CD4-positive, alpha-beta T cell (primary cell): ENCODE measurements at regions of chr15 and their contacts with region 1.

Region 1: DNA sequence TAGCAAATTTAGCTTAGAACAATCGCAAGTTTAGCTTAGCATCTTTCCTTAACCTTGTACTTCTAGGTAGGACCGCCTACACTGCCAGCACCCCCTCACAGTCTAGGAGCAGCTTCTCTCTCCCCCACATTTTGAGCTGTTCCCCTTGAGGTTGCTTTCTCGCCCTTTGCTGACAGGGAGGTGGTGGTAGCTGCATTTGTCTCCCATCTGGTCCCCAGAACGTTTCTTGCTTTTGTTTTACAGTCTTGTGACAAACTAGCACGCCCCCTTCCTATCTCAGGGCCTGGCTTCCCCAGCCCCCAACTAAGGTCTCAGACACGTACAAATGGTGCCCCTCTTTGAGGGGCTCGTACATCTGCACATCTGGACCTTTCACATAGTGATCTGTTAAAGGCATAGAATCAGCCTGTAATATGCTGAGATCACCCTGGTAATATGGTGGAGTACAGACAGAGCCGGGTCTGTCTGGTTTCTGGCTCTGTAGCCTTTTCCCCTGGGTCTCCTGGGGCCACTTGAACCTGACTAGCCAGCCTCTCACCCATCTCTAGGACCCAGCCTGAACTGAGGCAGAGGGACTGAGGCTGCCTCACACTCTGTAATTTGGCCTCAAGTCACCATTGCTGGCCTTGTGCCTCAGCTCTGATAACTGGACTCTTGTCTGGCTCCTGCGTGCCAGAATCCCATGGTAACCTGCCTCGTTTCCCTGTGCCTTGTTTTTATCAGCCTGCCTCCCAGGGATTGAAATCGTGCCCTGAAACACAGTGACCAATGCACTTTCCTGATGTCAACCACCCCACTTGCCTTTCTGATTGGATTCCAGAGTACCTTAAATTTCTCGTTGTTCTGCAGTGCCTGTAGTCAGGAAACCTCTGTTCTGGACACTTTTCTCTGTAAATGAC is 27.7 kb downstream of the CRTC3 start:
- DNase-seq: no peak
- ATAC-seq: no peak
- H3K4me3 ChIP-seq: no peak overlapping the region
- H3K4me3 Mint-ChIP-seq: peak overlapping the region; percentile 5
- H3K27ac ChIP-seq: no peak overlapping the region
- H3K27ac Mint-ChIP-seq: peak overlapping the region; percentile 93
- H3K4me1 ChIP-seq: peaks cover 41% of the 10 kb centered on the region
- H3K4me1 Mint-ChIP-seq: peaks cover 86% of the 10 kb centered on the region
- H3K27me3 ChIP-seq: no peaks in the 10 kb centered on the region
- H3K27me3 Mint-ChIP-seq: no peaks in the 10 kb centered on the region
- CTCF ChIP-seq: no peak

Region 2: GRCh38 chr15:90529371-90530249 is 27.8 kb before region 1 on chr15 and contains the start of gene CRTC3:
- CTCF ChIA-PET with region 1: interaction called, 5 read pairs
- POLR2A ChIA-PET with region 1: interaction called, 28 read pairs
- intact Hi-C with region 1: no loop called
- DNase-seq: peak; percentile 31 to 85 (median 54)
- ATAC-seq: peak; percentile 80
- H3K4me3 ChIP-seq: peak within 1 kb of the TSS; percentile 94
- H3K4me3 Mint-ChIP-seq: peak within 1 kb of the TSS; percentile 97
- H3K27ac ChIP-seq: peak within 1 kb of the TSS; percentile 44 to 72
- H3K27ac Mint-ChIP-seq: peak within 1 kb of the TSS; percentile 92
- H3K4me1 ChIP-seq: peaks cover 36% of the 10 kb centered on the region
- H3K4me1 Mint-ChIP-seq: peaks cover 39% of the 10 kb centered on the region
- H3K27me3 ChIP-seq: no peaks in the 10 kb centered on the region
- H3K27me3 Mint-ChIP-seq: no peaks in the 10 kb centered on the region
- CTCF ChIP-seq: no peak
- total RNA-seq, gene CRTC3: 90.7 to 92.4 TPM

Region 3: DNA sequence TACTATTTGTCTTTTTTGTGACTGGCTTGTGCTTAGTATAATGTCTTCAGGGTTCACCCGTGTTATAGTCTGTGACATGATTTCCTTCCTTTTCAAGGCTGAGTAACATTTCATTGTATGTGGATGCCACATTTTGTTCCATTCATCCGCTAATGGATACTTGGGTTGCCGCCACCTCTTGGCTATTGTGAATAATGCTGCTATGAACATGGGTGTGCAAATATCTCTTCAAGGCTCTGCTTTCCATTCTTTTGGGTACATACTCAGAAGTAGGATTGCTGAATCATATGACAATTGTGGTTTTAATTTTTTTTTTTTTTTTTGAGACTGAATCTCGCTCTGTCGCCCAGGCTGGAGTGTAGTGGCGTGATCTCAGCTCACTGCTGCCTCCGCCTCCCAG is 12.3 kb before region 1 on chr15:
- CTCF ChIA-PET with region 1: no interaction called
- POLR2A ChIA-PET with region 1: interaction called, 13 read pairs
- intact Hi-C with region 1: loop called in 1 of 2 experiments (anchors 2 kb)
- DNase-seq: peak in 2 of 14 experiments; percentile 9 to 22
- ATAC-seq: peak; percentile 18
- H3K4me3 ChIP-seq: no peak overlapping the region
- H3K4me3 Mint-ChIP-seq: peak overlapping the region; percentile 5
- H3K27ac ChIP-seq: no peak overlapping the region
- H3K27ac Mint-ChIP-seq: peak overlapping the region; percentile 71
- H3K4me1 ChIP-seq: peaks cover 28% of the 10 kb centered on the region
- H3K4me1 Mint-ChIP-seq: peaks cover 73% of the 10 kb centered on the region
- H3K27me3 ChIP-seq: no peaks in the 10 kb centered on the region
- H3K27me3 Mint-ChIP-seq: no peaks in the 10 kb centered on the region
- CTCF ChIP-seq: no peak

Region 4: GRCh38 chr15:90571063-90571541 is 13.7 kb after region 1 on chr15:
- CTCF ChIA-PET with region 1: interaction called, 7 read pairs
- POLR2A ChIA-PET with region 1: interaction called, 39 read pairs
- intact Hi-C with region 1: no loop called
- DNase-seq: peak in 2 of 14 experiments; percentile 53 to 60
- ATAC-seq: no peak
- H3K4me3 ChIP-seq: no peak overlapping the region
- H3K4me3 Mint-ChIP-seq: no peak overlapping the region
- H3K27ac ChIP-seq: peak overlapping the region in 1 of 2 donors; percentile 32
- H3K27ac Mint-ChIP-seq: peak overlapping the region; percentile 77
- H3K4me1 ChIP-seq: peaks cover 77% of the 10 kb centered on the region
- H3K4me1 Mint-ChIP-seq: peaks cover 89% of the 10 kb centered on the region
- H3K27me3 ChIP-seq: no peaks in the 10 kb centered on the region
- H3K27me3 Mint-ChIP-seq: no peaks in the 10 kb centered on the region
- CTCF ChIP-seq: no peak

Region 5: DNA sequence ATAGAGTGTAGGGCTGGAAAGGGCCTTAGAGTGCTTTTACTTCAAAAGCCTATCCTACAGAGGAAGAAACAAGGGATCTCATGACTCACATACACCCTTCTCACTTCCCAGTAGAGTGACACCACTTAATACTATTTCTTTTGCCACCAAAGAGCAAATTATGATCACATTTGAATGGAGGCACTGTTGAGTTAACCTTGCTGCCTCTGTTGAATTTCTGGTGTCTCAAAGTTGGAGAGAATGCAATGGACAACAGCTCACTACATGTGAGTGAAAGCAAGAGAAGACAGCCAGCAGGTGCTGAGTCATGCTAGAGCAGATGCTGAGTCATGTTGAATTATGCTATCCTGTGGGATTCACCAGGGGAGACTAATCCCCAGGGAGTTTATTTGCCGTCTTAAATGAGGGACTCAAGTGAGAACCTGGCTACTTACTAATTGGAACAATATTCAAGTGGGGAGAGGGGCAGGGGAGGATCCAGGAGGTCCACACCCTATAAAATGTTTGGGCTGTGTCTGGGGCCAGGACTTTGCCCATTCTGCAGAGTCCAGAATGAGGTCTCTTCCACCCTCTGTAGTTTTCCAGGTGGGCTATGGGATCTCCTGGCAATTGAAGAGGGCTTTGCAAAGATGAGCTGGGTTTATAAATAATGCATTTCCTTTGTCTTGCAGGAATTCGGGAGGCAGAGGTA is 1872.1 kb after region 1 on chr15:
- CTCF ChIA-PET with region 1: no interaction called
- POLR2A ChIA-PET with region 1: no interaction called
- intact Hi-C with region 1: no loop called
- DNase-seq: no peak
- ATAC-seq: no peak
- H3K4me3 ChIP-seq: no peak overlapping the region
- H3K4me3 Mint-ChIP-seq: no peak overlapping the region
- H3K27ac ChIP-seq: no peak overlapping the region
- H3K27ac Mint-ChIP-seq: no peak overlapping the region
- H3K4me1 ChIP-seq: no peaks in the 10 kb centered on the region
- H3K4me1 Mint-ChIP-seq: no peaks in the 10 kb centered on the region
- H3K27me3 ChIP-seq: peaks cover 2 to 21% of the 10 kb centered on the region in 2 experiments
- H3K27me3 Mint-ChIP-seq: peaks cover 33% of the 10 kb centered on the region
- CTCF ChIP-seq: no peak